PC-3 (cell line): ENCODE measurements at regions of chr7 and their contacts with region 1.

Region 1: DNA sequence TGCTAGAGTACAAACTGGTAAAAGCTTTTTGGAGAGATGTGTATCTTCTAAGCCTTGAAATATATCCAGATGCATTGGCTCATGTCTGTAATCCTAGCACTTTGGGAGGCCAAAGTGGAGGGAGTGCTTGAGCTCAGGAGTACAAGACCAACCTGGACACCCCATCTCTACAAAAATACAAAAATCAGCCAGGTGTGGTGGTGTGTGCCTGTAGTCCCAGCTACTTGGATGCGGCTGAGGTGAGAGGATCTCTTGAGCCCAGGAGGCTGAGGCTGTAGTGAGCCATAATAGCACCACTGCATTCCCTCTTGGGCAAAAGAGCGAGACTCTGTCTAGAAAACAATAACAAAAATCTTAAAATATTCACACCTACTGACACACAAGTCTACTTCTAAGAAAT is 25.6 kb downstream of the TMEM209 start:
- DNase-seq: no peak
- ATAC-seq: no peak
- H3K4me3 ChIP-seq: no peak overlapping the region
- H3K27ac ChIP-seq: no peak overlapping the region
- H3K4me1 ChIP-seq: no peaks in the 10 kb centered on the region
- H3K27me3 ChIP-seq: no peaks in the 10 kb centered on the region
- CTCF ChIP-seq: no peak

Region 2: DNA sequence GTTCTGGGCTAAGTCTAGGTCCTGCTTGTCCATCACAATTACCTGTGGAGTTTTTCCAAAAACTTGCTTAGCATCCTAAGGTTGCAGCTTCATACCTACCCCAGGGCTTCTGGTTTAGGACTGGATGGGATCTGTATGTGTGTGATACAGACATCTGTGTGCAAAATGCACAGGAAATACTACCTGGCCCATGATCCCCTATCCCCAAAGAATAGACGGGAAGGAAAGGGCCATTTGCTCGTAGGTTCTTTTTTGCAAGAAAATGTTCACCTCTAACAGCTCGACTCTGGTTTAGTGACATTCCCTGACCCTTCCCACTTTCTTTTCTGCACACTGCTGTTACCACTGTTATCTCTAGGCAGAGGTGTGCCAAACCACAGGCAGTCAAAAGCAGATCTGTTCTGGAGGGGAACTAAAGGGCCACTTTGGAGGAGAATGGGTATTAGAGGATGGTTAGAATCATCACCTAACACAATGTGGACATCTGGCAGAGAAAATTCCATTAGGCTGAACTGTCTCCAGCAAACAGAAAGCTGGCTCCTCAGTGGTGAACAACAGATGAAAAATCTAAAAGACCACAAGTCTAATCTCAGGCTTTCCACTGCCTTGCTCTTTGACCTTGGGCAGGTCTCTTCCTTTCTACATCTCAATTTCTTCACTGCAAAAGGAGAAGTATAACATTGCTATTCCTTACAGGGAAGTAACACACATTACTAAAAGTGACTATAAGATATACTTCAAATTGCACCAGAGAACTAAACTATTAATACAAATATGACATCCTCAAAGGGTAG is 334.3 kb before region 1 on chr7:
- CTCF ChIA-PET with region 1: no interaction called
- POLR2A ChIA-PET with region 1: no interaction called
- intact Hi-C with region 1: no loop called
- DNase-seq: peak; percentile 68
- ATAC-seq: peak; percentile 53
- H3K4me3 ChIP-seq: peak overlapping the region; percentile 26; the same call in 1 of the 2 replicates
- H3K27ac ChIP-seq: peak overlapping the region; percentile 94
- H3K4me1 ChIP-seq: peaks cover 35% of the 10 kb centered on the region
- H3K27me3 ChIP-seq: no peaks in the 10 kb centered on the region
- CTCF ChIP-seq: no peak

Region 3: GRCh38 chr7:130221746-130222145 is 42.1 kb after region 1 on chr7:
- CTCF ChIA-PET with region 1: no interaction called
- POLR2A ChIA-PET with region 1: interaction called, 10 read pairs
- intact Hi-C with region 1: no loop called
- DNase-seq: no peak
- ATAC-seq: no peak
- H3K4me3 ChIP-seq: no peak overlapping the region
- H3K27ac ChIP-seq: no peak overlapping the region
- H3K4me1 ChIP-seq: no peaks in the 10 kb centered on the region; the same call in 1 of the 2 replicates
- H3K27me3 ChIP-seq: no peaks in the 10 kb centered on the region
- CTCF ChIP-seq: no peak